Body of pancreas (tissue), 4 donors: ENCODE measurements at regions of chr12 and their contacts with region 1.

Region 1: DNA sequence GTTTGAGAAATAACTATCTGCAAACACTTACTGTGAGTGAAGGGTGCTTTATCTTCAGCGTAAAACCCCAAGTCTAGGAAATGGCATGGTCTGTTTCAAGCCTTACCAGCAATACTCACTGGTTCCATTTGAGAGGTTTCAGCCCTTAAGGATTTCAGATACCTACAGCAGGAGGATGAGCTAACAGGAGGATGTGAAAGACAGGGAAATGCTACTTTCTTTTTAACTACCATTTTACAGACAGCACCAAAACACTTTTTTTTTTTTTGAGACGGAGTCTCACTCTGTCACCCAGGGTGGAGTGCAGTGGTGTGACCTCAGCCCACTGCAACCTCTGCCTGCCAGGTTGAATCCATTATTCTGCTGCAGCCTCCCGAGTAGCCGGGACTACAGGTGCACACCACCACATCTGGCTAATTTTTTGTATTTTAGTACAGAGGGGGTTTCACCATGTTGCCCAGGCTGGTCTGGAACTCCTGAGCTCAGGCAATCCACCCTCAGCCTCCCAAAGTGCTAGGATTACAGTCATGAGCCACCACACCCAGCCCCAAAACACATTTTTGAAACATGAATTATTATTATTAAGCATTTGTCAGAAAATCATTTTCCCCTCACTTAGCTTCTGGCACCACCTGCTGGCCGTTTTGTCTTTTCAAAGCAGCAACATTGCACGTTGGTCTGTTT is 4.6 kb downstream of the MTRFR start:
- DNase-seq: peak; percentile 67 to 77 (median 71)
- ATAC-seq: no peak
- H3K4me3 ChIP-seq: no peak overlapping the region
- H3K27ac ChIP-seq: peak overlapping the region in 1 of 4 donors; percentile 19
- H3K4me1 ChIP-seq: peaks cover 21% of the 10 kb centered on the region
- H3K27me3 ChIP-seq: no peaks in the 10 kb centered on the region
- CTCF ChIP-seq: peak; percentile 52 to 79 (median 74)
- POLR2A ChIP-seq: no peak

Region 2: DNA sequence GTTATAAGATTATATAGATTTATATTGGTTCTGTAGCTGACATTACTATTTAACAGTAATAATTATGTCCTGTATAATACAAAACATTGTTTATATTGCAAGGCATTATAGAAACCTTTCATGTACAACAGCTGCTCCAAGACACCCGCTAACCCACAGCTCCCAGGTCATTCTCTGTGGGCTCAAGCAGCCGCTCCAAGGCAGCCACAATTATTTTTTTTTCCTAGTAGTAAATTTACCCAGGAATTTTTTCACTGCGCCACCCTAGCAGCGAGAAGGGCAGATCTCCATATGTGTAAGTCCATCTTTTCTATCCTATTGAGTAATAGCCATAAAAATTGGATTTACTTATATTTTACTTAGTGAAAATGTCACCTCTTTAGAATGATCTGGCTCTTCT is 674.4 kb before region 1 on chr12:
- intact Hi-C with region 1: no loop called
- DNase-seq: no peak
- ATAC-seq: no peak
- H3K4me3 ChIP-seq: no peak overlapping the region
- H3K27ac ChIP-seq: no peak overlapping the region
- H3K4me1 ChIP-seq: no peaks in the 10 kb centered on the region
- H3K27me3 ChIP-seq: no peaks in the 10 kb centered on the region
- CTCF ChIP-seq: no peak
- POLR2A ChIP-seq: no peak

Region 3: DNA sequence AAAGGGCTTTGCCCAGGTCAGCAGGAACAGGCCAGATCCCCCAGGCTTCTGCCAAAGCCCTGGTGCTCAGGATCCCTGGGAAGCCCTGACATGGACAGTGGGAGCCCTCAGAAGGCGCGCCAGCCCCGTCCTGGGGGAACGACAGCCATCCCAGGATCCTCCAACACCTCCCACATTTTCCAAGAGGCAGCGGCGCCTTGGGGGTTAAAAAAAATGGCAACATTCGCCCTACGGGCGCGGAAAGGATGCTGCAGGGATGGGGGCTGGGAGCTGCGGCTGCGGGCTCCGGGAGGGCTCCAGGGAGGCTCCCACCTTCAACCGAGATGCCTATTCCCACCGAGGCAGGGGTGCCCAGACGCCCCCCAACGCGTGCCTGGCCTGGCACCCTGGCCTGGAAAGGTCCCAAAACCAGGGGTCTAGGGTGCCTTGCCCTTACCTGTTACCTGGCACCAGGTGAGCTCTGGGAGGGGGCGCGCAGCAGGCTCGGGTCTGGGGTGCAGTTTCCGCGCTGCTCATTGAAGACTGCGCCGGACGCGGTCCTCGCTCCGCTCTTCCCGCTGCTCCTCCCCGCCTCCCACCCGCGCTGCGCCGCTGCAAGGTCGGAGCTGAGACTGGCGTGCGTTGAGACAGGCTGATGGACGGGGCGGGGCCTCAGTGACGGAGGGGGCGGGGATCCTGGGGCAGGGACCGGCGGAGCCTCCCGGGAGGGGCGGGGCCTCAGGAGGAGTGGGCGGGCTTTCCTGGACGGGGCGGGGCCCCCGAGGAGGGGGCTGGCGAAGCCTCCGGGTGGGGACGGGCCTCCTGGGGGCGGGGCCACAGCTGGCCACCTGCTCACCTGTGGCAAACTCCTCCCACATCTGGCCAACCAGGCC is 271.7 kb before region 1 on chr12 and contains the start of gene ABCB9:
- intact Hi-C with region 1: no loop called
- DNase-seq: peak; percentile 97 to 98 (median 97)
- ATAC-seq: peak; percentile 95
- H3K4me3 ChIP-seq: peak within 1 kb of the TSS in 1 of 2 donors; percentile 10
- H3K27ac ChIP-seq: peak within 1 kb of the TSS; percentile 35 to 75 (median 56)
- H3K4me1 ChIP-seq: peaks cover 58% of the 10 kb centered on the region
- H3K27me3 ChIP-seq: no peaks in the 10 kb centered on the region
- CTCF ChIP-seq: no peak
- POLR2A ChIP-seq: peak; percentile 8 to 67 (median 58)
- total RNA-seq, gene ABCB9: 5.2 to 7.9 TPM

Region 4: GRCh38 chr12:123043536-123044001 is 194.2 kb before region 1 on chr12:
- intact Hi-C with region 1: loop called (anchors 5 kb)
- DNase-seq: peak; percentile 76 to 87 (median 84)
- ATAC-seq: peak; percentile 89
- H3K4me3 ChIP-seq: no peak overlapping the region
- H3K27ac ChIP-seq: no peak overlapping the region
- H3K4me1 ChIP-seq: peaks cover 7% of the 10 kb centered on the region
- H3K27me3 ChIP-seq: no peaks in the 10 kb centered on the region
- CTCF ChIP-seq: peak; percentile 31 to 80 (median 73)
- POLR2A ChIP-seq: no peak